Activated naive CD4-positive, alpha-beta T cell treated with anti-CD3 and anti-CD28 coated beads for 36 hours (primary cell): ENCODE measurements at regions of chr12 and their contacts with region 1.

Region 1: GRCh38 chr12:121626087-121626852 is at the start of gene ORAI1:
- DNase-seq: peak; percentile 97
- H3K4me3 Mint-ChIP-seq: peak within 1 kb of the TSS; percentile 83
- H3K27ac Mint-ChIP-seq: peak within 1 kb of the TSS; percentile 98
- H3K4me1 Mint-ChIP-seq: peaks cover 37% of the 10 kb centered on the region
- H3K27me3 Mint-ChIP-seq: no peaks in the 10 kb centered on the region
- total RNA-seq, gene ORAI1: 21.1 to 21.8 TPM

Region 2: DNA sequence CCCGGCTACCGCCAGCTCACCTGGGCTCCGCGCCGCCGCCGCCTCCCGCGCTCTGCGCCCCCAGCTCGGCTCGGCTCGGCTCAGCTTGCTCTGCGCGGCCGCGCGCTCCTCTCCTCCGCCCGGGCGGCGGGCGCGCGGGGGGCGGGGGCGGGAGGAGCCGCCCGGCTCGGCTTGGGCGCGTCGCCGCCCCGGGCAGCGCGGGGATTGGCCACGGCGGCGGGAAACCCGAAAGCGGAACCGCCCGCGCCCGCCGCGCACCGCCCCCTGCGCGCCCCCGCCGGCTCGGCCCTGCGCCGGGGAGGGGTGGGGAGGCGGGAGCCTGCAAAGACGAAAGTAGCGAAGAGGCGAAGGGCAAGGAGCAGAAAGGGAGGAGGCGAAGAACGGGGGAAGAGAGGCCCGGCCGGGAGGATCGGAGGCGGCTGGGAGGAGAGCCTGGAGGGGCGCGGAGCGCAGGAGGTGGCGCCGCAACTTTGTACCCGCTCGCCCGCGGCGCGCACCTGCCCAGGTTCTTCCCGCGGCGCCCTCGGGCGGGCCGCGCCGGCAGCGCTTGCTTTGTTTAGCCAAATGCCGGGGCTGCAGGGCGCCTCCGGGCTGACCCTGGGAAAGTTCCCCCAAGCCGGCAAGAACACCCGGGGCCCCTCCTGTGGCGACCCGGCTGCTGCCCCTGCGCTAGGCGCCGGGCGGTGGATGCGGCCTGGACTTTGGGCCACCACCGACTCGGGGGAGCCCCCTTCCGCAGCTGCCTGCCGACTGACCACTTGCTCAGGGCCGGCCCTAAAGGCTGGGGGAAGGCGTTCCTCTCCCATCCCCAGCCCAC is 329.4 kb before region 1 on chr12 and contains the start of gene CAMKK2:
- CTCF ChIA-PET with region 1: no interaction called
- intact Hi-C with region 1: loop called (anchors 1 kb)
- DNase-seq: peak; percentile 82
- H3K4me3 Mint-ChIP-seq: peak within 1 kb of the TSS; percentile 90
- H3K27ac Mint-ChIP-seq: peak within 1 kb of the TSS; percentile 65
- H3K4me1 Mint-ChIP-seq: peaks cover 24% of the 10 kb centered on the region
- H3K27me3 Mint-ChIP-seq: no peaks in the 10 kb centered on the region
- total RNA-seq, gene CAMKK2: 14.8 to 18.8 TPM

Region 3: DNA sequence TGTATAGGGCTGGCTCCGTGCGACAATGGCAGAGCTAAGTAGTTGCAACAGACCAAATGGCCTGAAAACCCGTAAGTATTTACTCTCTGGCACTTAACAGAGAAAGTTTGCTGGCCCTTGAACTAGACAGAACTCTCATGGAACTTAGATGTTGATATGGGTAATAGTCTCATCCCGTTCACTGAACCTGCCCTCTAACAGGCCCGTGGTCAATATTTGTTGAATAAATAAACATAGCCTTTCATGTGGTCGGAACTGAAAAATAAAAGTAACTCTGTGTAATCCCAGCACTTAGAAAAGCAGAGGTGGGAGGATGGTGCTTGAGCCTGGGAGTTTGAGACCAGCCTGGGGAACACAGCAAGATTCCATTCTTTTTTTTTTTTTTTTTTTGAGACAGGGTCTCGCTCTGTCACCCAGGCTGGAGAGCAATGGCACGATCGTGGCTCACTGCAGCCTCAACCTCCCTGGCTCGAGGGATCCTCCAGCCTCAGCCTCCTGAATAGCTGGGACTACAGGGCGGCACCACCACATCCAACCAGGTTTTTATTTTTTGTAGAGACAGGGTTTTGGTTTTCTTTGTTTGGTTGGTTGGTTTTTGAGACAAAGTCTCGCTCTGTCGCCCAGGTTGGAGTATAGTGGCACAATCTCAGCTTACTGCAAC is 75.2 kb before region 1 on chr12:
- CTCF ChIA-PET with region 1: interaction called, 65 read pairs
- intact Hi-C with region 1: loop called (anchors 1 kb)
- DNase-seq: no peak
- H3K4me3 Mint-ChIP-seq: no peak overlapping the region
- H3K27ac Mint-ChIP-seq: no peak overlapping the region
- H3K4me1 Mint-ChIP-seq: peaks cover 4% of the 10 kb centered on the region
- H3K27me3 Mint-ChIP-seq: no peaks in the 10 kb centered on the region

Region 4: DNA sequence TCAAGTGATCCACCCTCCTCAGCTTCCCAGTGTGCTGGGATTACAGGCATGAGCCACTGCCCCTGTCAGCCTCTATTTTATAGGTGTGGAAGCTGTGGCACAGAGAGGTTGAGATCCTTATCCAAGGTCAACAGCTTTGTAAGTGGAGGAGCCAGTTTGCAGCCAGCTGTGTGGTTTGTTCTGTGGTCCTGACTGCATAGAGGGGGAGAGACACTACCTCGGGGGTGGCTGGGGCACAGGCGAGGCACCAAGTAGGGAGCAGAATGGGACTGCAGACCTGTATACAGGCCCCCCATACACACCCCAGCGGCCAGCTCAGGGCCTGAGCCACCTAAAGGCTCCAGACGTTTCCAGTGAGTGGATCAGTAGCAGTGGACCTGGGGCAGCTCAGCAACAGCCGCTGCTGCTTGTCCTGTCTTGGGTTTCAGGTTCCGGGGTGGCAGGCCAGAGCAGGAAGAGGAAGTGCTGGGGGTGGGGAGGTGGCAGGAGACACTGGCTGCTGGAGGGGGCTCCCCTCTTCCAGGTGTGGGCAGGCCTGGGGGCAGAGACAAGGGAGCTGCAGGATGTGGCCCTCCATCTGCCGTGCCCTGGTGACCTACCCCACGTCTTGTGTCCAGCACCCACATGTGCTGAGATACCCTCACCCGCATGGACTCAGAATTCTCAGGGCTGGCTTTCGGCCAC is 11.1 kb after region 1 on chr12:
- CTCF ChIA-PET with region 1: interaction called, 23 read pairs
- intact Hi-C with region 1: loop called (anchors 1 kb)
- DNase-seq: peak; percentile 82
- H3K4me3 Mint-ChIP-seq: peak overlapping the region; percentile 66
- H3K27ac Mint-ChIP-seq: peak overlapping the region; percentile 94
- H3K4me1 Mint-ChIP-seq: peaks cover 51% of the 10 kb centered on the region
- H3K27me3 Mint-ChIP-seq: no peaks in the 10 kb centered on the region

Region 5: GRCh38 chr12:121678716-121679580 is 52.7 kb after region 1 on chr12:
- CTCF ChIA-PET with region 1: interaction called, 14 read pairs
- intact Hi-C with region 1: loop called (anchors 1 kb)
- DNase-seq: no peak
- H3K4me3 Mint-ChIP-seq: no peak overlapping the region
- H3K27ac Mint-ChIP-seq: no peak overlapping the region
- H3K4me1 Mint-ChIP-seq: peaks cover 8% of the 10 kb centered on the region
- H3K27me3 Mint-ChIP-seq: no peaks in the 10 kb centered on the region